ENCODE measurements at regions of chr2 and their contacts with region 1.

Region 1: GRCh38 chr2:47867205-47867604 is 39.1 kb downstream of the FBXO11 start:
- DNase-seq: no peak
- ATAC-seq: peak; percentile 51 to 64 (median 63)
- H3K4me3 ChIP-seq: no peak overlapping the region
- H3K4me3 Mint-ChIP-seq: peak overlapping the region; percentile 35
- H3K27ac ChIP-seq: no peak overlapping the region
- H3K27ac Mint-ChIP-seq: peak overlapping the region; percentile 74 to 82
- H3K4me1 ChIP-seq: peaks cover 12% of the 10 kb centered on the region
- H3K4me1 Mint-ChIP-seq: peaks cover 72 to 85% of the 10 kb centered on the region in 2 donors
- H3K27me3 ChIP-seq: no peaks in the 10 kb centered on the region
- H3K27me3 Mint-ChIP-seq: no peaks in the 10 kb centered on the region
- CTCF ChIP-seq: no peak

Region 2: GRCh38 chr2:47803363-47803762 is 63.8 kb before region 1 on chr2:
- intact Hi-C with region 1: no loop called
- DNase-seq: no peak
- ATAC-seq: no peak
- H3K4me3 ChIP-seq: no peak overlapping the region
- H3K4me3 Mint-ChIP-seq: no peak overlapping the region
- H3K27ac ChIP-seq: no peak overlapping the region
- H3K27ac Mint-ChIP-seq: no peak overlapping the region
- H3K4me1 ChIP-seq: no peaks in the 10 kb centered on the region
- H3K4me1 Mint-ChIP-seq: peaks cover 6 to 14% of the 10 kb centered on the region in 2 donors
- H3K27me3 ChIP-seq: no peaks in the 10 kb centered on the region
- H3K27me3 Mint-ChIP-seq: no peaks in the 10 kb centered on the region
- CTCF ChIP-seq: no peak

Region 3: GRCh38 chr2:48016225-48017019 is 149.2 kb after region 1 on chr2:
- intact Hi-C with region 1: loop called (anchors 10 kb)
- DNase-seq: peak in 1 of 2 donors; percentile 42
- ATAC-seq: no peak
- H3K4me3 ChIP-seq: no peak overlapping the region
- H3K4me3 Mint-ChIP-seq: no peak overlapping the region
- H3K27ac ChIP-seq: no peak overlapping the region
- H3K27ac Mint-ChIP-seq: no peak overlapping the region
- H3K4me1 ChIP-seq: no peaks in the 10 kb centered on the region
- H3K4me1 Mint-ChIP-seq: no peaks in the 10 kb centered on the region
- H3K27me3 ChIP-seq: no peaks in the 10 kb centered on the region
- H3K27me3 Mint-ChIP-seq: peaks cover 12 to 13% of the 10 kb centered on the region in 2 donors
- CTCF ChIP-seq: no peak